Heart right ventricle (tissue), 16 donors: ENCODE measurements at regions of chr4 and their contacts with region 1.

Region 1: DNA sequence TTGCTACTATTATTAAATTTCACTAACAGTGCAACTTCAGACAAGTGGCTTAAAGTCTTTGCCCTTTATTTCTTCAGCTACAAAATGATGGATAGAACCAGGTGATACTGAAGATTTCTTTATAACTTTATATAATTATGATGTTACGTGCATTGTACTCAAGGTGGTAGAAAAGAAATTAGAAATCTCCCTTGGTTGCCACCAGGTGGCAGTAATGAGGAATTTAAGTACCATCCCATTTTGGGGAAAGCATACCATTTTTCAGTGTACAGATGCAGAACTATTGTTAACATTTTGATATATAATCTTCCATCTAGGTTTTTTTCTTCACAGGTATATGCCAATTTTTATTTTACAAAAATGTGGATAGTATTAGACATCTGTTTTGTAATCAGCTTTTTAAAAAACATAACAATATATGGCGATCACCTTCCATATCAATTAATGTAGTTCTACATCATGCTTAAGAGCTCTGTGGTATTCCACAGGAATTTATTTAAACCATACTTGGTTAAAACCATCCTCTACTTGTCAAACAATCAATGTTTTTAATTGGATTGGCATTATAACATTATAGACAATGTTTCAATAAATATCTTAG is 37.7 kb upstream of the RAB33B start:
- DNase-seq: no peak
- ATAC-seq: no peak
- H3K4me3 ChIP-seq: no peak overlapping the region
- H3K27ac ChIP-seq: no peak overlapping the region
- H3K4me1 ChIP-seq: peaks cover 0 to 26% (median 13%) of the 10 kb centered on the region in 9 donors
- H3K27me3 ChIP-seq: no peaks in the 10 kb centered on the region
- CTCF ChIP-seq: peak; percentile 51 to 82 (median 71)

Region 2: DNA sequence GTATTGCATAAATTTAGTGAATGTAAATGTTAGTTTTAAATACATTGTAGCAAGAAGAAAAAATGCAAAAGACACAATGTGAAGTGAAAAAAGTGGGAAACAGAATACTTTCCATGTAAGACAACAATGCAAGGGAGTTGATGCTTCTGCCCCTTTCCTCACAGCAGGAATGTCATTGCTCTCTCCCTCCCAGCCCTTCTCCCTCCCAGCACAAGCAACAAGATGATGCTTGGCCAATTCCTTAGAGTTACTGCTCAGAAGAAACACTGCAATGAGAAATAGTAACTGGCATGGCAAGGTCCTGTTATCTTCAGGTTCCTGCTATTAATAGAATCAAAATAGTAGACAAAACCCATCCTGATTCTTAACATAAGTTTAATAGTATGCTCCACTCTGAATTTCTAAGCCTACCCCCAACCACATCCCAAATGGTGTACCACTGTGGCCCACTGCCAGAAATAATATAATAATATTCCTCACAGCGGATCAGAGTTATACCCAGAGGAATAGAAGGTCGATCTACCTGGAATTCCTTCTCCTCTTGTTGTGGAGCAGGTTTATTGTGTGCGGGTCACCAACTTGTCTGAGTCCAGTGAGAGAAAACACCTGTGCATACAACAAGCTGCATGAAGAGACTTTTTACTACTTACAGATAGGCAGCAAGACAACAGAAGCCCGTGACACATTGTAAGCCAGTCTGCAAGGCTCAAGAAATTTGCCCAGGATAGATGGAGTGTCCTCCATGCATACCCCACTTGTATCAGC is 1104.2 kb before region 1 on chr4:
- intact Hi-C with region 1: no loop called
- DNase-seq: no peak
- ATAC-seq: no peak
- H3K4me3 ChIP-seq: no peak overlapping the region
- H3K27ac ChIP-seq: no peak overlapping the region
- H3K4me1 ChIP-seq: no peaks in the 10 kb centered on the region
- H3K27me3 ChIP-seq: no peaks in the 10 kb centered on the region
- CTCF ChIP-seq: no peak

Region 3: DNA sequence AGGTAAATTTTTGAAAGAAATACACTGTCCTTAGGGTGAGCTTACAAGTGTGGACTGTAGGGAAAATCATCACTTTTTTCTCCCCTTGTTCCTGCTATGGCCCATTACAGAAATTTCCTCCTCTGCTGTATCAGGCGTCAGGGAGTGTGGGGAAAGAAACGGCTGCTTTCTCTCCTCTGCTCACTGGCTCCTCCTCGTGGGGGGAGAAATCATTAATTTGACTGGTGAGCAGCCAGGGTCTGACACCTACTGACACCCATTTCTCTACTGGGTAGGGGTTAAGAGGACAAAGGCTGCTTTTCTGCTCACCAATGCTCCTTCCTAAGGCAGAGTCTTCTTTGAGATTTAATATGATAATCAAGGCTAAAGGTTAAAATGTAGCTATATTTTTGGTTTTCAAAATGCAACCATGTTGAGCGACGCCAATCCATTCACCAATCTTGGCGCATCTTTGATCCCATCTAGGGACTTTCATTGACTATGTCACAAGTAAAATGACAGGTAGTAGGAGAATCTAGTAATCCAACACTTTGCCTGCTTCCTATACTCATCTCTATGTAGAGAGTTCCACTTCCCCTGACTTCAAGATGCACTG is 114.8 kb after region 1 on chr4:
- intact Hi-C with region 1: loop called in 1 of 10 experiments (anchors 10 kb)
- DNase-seq: peak in 1 of 2 donors; percentile 57
- ATAC-seq: peak in 5 of 8 donors; percentile 34 to 67 (median 53)
- H3K4me3 ChIP-seq: no peak overlapping the region
- H3K27ac ChIP-seq: no peak overlapping the region
- H3K4me1 ChIP-seq: peaks cover 0 to 24% (median 4%) of the 10 kb centered on the region in 9 donors
- H3K27me3 ChIP-seq: no peaks in the 10 kb centered on the region
- CTCF ChIP-seq: peak; percentile 42 to 71 (median 60)

Region 4: DNA sequence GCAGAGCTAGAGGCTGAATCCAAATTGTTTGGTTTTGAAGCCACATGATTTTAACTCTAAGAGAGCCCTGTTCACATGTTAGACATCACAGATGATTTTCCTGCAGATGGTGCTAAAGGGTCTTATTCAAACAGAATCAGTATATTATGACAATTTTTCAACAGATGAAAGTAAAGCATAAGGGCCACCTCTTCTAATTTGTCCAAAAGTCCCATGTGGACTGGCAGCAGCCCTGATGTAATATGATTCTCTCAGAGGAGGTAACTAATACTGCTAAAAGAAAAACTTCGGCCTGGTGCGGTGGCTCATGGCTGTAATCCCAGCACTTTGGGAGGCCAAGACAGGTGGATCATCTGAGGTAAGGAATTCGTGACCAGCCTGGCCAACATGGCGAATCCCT is 165.9 kb after region 1 on chr4:
- intact Hi-C with region 1: no loop called
- DNase-seq: no peak
- ATAC-seq: no peak
- H3K4me3 ChIP-seq: no peak overlapping the region
- H3K27ac ChIP-seq: no peak overlapping the region
- H3K4me1 ChIP-seq: no peaks in the 10 kb centered on the region
- H3K27me3 ChIP-seq: no peaks in the 10 kb centered on the region
- CTCF ChIP-seq: peak in 1 of 9 donors; percentile 15

Region 5: GRCh38 chr4:139794158-139794954 is 378.2 kb after region 1 on chr4:
- intact Hi-C with region 1: no loop called
- DNase-seq: no peak
- ATAC-seq: peak in 1 of 8 donors; percentile 37
- H3K4me3 ChIP-seq: no peak overlapping the region
- H3K27ac ChIP-seq: no peak overlapping the region
- H3K4me1 ChIP-seq: peaks cover 0 to 44% (median 13%) of the 10 kb centered on the region in 9 donors
- H3K27me3 ChIP-seq: no peaks in the 10 kb centered on the region
- CTCF ChIP-seq: no peak